Posterior cingulate gyrus (tissue), 11 donors: ENCODE measurements at regions of chr21 and their contacts with region 1.

Region 1: DNA sequence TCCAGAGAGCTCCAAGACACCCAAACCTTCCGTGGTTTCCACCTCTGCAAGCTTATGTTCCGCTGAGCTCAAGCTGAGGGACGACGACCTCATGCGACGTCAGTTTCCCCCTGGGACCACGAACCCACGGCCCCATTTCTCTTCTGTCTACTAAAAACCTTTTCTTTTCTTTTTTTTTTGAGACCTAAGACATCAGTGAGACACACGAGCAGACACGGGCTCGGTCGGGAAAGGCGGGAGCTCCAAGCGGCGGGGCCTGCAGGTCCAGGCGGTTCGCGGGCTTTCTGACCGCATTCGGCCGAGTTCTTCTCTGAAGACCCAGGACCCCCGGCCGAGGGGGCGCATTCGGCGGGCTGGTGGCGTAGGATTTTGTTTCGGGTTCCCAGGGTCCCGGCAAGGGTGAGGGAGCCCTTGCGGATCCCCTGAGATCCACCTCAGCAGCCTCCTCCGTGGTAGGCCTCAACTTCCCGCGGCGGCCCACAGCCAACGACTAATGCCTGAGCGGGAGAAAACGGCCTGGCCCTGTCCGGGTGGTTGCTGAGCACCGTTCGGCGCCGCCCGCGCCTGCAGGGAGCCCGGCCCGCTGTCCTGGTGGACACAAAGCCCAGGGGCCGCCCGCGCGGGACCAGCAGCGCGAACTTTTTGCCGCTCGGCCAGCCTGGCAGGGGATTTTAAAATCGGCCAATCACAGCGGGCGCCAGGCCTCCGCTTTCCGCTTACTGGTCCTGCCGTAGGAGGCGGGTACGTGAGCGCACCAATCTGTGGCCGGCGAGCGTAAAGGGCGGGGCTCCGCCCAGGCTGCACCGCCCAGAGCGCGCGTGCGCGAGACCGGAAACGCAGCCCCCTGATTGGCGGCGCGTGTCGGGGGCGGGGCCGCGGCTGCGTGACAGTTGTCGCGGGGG is at the start of gene C21orf58:
- DNase-seq: peak; percentile 95 to 100 (median 97)

Region 2: GRCh38 chr21:46144464-46145070 is 178.9 kb before region 1 on chr21:
- intact Hi-C with region 1: loop called (anchors 10 kb)
- DNase-seq: peak in 3 of 10 donors; percentile 47 to 83 (median 77)

Region 3: DNA sequence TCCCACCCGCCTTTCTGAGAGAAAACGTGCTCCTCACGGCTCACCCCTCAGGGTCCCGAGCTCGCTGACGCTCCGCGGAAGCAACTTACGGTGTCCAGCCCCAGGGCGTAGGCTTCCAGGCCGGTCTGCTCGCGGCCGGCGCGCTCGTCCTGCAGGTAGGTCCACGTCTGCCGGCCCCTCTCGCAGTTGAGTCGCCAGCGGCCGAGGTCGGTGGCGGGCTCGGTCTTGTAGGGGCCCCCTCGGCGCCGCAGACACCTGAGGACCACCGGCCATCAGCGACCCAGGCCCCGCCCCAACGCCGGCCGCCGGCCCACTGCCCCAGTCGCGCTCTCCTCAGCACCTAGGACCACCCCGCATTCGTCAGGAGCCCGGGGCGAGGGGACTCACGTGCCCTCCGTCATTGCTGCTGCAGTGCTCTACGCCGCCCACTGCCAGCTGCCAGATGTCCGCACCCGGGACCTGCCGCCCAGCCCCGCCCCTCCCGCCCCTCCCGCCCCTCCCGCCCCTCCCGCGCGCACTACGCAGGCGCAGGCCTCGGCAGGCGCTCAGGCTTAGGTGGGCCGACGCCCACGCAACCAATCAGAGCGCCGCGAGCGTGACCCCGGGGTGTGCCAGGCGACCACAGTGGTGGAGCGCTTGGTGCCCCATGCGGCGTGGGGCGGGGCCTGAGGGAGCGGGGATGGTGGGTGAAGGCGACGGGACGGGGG is 95.0 kb before region 1 on chr21 and contains the start of gene LSS:
- intact Hi-C with region 1: loop called (anchors 2 kb)
- DNase-seq: peak; percentile 91 to 100 (median 96)

Region 4: GRCh38 chr21:46285761-46286496 is 37.5 kb before region 1 on chr21 and contains the start of gene YBEY:
- intact Hi-C with region 1: loop called (anchors 2 kb)
- DNase-seq: peak; percentile 81 to 98 (median 92)

Region 5: DNA sequence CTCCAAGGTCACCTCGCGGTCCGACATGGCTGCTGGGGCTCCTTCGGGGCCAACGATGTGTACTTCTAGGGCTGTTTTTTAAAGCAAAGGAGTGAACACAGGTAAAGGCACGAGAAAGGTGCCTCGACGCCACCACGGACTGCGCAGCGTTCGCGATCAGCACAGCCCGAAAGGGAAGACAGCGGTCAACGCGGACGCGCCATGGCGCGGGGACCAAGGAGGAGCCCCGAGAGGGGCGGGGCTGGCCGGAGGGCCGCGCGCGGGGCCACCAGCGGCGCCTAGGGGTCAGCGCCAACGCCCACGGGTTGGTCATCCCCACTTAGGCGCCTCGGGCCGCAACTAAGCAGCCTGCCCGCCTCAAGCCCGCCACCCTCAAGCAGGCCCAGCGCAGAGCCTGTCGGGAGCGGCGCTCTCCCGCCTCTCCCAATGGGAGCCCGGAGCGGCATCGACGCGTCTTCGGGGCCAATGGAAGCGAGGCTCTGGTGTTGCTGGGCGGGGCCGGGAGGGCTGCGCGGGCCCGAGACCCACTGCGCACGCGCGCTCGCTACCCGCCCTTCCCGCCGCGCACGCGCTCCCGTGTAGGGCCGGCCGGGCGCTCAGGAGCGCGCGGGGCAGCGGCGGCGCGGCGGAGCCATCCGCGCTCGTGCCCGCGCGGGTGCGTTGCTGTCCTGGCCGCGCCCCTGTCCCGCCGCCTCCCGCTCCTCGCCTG is 135.0 kb after region 1 on chr21 and contains the start of gene DIP2A:
- intact Hi-C with region 1: loop called (anchors 10 kb)
- DNase-seq: peak; percentile 90 to 100 (median 94)

Region 6: GRCh38 chr21:46509741-46510502 is 186.4 kb after region 1 on chr21:
- intact Hi-C with region 1: no loop called
- DNase-seq: no peak

Region 7: GRCh38 chr21:46551636-46552241 is 228.3 kb after region 1 on chr21:
- intact Hi-C with region 1: no loop called
- DNase-seq: peak in 1 of 10 donors; percentile 72